MCF 10A (cell line): ENCODE measurements at regions of chr3 and their contacts with region 1.

Region 1: GRCh38 chr3:143001369-143002082 is at the start of gene U2SURP:
- DNase-seq: peak; percentile 98
- H3K4me3 Mint-ChIP-seq: peak within 1 kb of the TSS; percentile 94
- H3K27ac Mint-ChIP-seq: peak within 1 kb of the TSS; percentile 99
- H3K4me1 Mint-ChIP-seq: peaks cover 25% of the 10 kb centered on the region
- H3K27me3 Mint-ChIP-seq: no peaks in the 10 kb centered on the region
- CTCF ChIP-seq: no peak
- total RNA-seq, gene U2SURP: 131 and 146 TPM in 2 replicates

Region 2: GRCh38 chr3:142578327-142579223 is 423.0 kb before region 1 on chr3 and contains the start of gene ATR:
- CTCF ChIA-PET with region 1: interaction called, 6 read pairs
- POLR2A ChIA-PET with region 1: interaction called, 96 read pairs
- intact Hi-C with region 1: loop called (anchors 5 kb)
- DNase-seq: peak; percentile 97
- H3K4me3 Mint-ChIP-seq: peak within 1 kb of the TSS; percentile 95
- H3K27ac Mint-ChIP-seq: peak within 1 kb of the TSS; percentile 90
- H3K4me1 Mint-ChIP-seq: peaks cover 29% of the 10 kb centered on the region
- H3K27me3 Mint-ChIP-seq: peaks cover 14% of the 10 kb centered on the region
- CTCF ChIP-seq: no peak
- total RNA-seq, gene ATR: 27.2 and 30.2 TPM in 2 replicates

Region 3: GRCh38 chr3:142645236-142645793 is 356.2 kb before region 1 on chr3:
- CTCF ChIA-PET with region 1: no interaction called
- POLR2A ChIA-PET with region 1: interaction called, 13 read pairs
- intact Hi-C with region 1: no loop called
- DNase-seq: peak; percentile 80
- H3K4me3 Mint-ChIP-seq: no peak overlapping the region
- H3K27ac Mint-ChIP-seq: no peak overlapping the region
- H3K4me1 Mint-ChIP-seq: peaks cover 28% of the 10 kb centered on the region
- H3K27me3 Mint-ChIP-seq: no peaks in the 10 kb centered on the region
- CTCF ChIP-seq: no peak

Region 4: GRCh38 chr3:142863010-142863715 is 138.4 kb before region 1 on chr3:
- CTCF ChIA-PET with region 1: interaction called, 3 read pairs
- POLR2A ChIA-PET with region 1: interaction called, 18 read pairs
- intact Hi-C with region 1: no loop called
- DNase-seq: peak; percentile 97
- H3K4me3 Mint-ChIP-seq: peak overlapping the region; percentile 62
- H3K27ac Mint-ChIP-seq: peak overlapping the region; percentile 88
- H3K4me1 Mint-ChIP-seq: peaks cover 19% of the 10 kb centered on the region
- H3K27me3 Mint-ChIP-seq: no peaks in the 10 kb centered on the region
- CTCF ChIP-seq: no peak

Region 5: DNA sequence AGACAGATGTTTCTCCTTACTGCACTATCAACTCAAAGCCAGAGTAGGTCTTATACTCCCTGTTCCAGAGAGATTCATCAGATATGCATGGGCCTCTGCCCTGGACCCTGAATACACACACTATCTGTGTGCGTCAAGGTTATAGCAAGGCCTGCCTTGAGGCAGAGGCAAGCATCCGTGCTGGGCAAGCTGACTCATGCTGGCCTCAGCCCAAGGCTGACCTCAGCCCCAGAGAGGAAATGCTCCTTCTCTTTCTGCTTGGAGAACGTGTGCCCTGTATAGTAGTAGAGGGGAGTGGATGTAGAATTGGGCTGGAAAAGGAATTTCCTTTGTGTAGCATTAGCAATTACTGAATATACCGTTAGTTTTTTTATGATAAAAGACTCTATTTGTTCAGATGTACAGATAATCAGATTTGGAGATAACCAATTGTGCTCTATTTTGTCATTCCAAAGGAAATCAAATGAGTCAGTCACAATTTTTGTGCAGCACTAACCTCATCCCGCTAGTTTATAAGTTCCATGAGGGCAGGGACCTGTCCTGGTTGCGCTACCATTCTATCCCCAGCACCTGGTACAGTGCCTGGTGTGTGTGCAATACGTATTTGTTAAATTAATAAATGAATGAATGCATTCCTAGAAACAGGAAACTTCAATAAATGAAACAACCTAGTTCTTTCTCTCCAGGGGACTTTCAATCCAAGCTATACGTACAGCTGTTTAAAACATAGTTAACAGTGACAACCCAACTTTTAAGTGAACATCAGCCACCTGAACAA is 24.7 kb before region 1 on chr3:
- CTCF ChIA-PET with region 1: interaction called, 3 read pairs
- POLR2A ChIA-PET with region 1: interaction called, 13 read pairs
- intact Hi-C with region 1: no loop called
- DNase-seq: peak; percentile 92
- H3K4me3 Mint-ChIP-seq: no peak overlapping the region
- H3K27ac Mint-ChIP-seq: peak overlapping the region; percentile 9
- H3K4me1 Mint-ChIP-seq: peaks cover 5% of the 10 kb centered on the region
- H3K27me3 Mint-ChIP-seq: no peaks in the 10 kb centered on the region
- CTCF ChIP-seq: no peak

Region 6: GRCh38 chr3:143016321-143016972 is 14.9 kb after region 1 on chr3:
- CTCF ChIA-PET with region 1: interaction called, 18 read pairs
- POLR2A ChIA-PET with region 1: interaction called, 63 read pairs
- intact Hi-C with region 1: no loop called
- DNase-seq: no peak
- H3K4me3 Mint-ChIP-seq: no peak overlapping the region
- H3K27ac Mint-ChIP-seq: peak overlapping the region; percentile 63
- H3K4me1 Mint-ChIP-seq: no peaks in the 10 kb centered on the region
- H3K27me3 Mint-ChIP-seq: no peaks in the 10 kb centered on the region
- CTCF ChIP-seq: peak; percentile 33

Region 7: GRCh38 chr3:143216709-143217182 is 215.2 kb after region 1 on chr3:
- CTCF ChIA-PET with region 1: no interaction called
- POLR2A ChIA-PET with region 1: no interaction called
- intact Hi-C with region 1: no loop called
- DNase-seq: no peak
- H3K4me3 Mint-ChIP-seq: no peak overlapping the region
- H3K27ac Mint-ChIP-seq: peak overlapping the region; percentile 5
- H3K4me1 Mint-ChIP-seq: peaks cover 7% of the 10 kb centered on the region
- H3K27me3 Mint-ChIP-seq: no peaks in the 10 kb centered on the region
- CTCF ChIP-seq: no peak

Region 8: GRCh38 chr3:143276592-143276991 is 275.1 kb after region 1 on chr3:
- CTCF ChIA-PET with region 1: no interaction called
- POLR2A ChIA-PET with region 1: no interaction called
- intact Hi-C with region 1: no loop called
- DNase-seq: no peak
- H3K4me3 Mint-ChIP-seq: no peak overlapping the region
- H3K27ac Mint-ChIP-seq: no peak overlapping the region
- H3K4me1 Mint-ChIP-seq: no peaks in the 10 kb centered on the region
- H3K27me3 Mint-ChIP-seq: no peaks in the 10 kb centered on the region
- CTCF ChIP-seq: no peak